ENCODE measurements at regions of chr5 and their contacts with region 1.

Region 1: GRCh38 chr5:149551200-149552037 is at the start of gene CSNK1A1:
- DNase-seq: peak; percentile 99
- H3K4me3 Mint-ChIP-seq: peak within 1 kb of the TSS; percentile 97
- H3K27ac Mint-ChIP-seq: peak within 1 kb of the TSS; percentile 99
- H3K4me1 Mint-ChIP-seq: peaks cover 33% of the 10 kb centered on the region
- H3K27me3 Mint-ChIP-seq: no peaks in the 10 kb centered on the region
- total RNA-seq, gene CSNK1A1: 165 to 170 TPM

Region 2: DNA sequence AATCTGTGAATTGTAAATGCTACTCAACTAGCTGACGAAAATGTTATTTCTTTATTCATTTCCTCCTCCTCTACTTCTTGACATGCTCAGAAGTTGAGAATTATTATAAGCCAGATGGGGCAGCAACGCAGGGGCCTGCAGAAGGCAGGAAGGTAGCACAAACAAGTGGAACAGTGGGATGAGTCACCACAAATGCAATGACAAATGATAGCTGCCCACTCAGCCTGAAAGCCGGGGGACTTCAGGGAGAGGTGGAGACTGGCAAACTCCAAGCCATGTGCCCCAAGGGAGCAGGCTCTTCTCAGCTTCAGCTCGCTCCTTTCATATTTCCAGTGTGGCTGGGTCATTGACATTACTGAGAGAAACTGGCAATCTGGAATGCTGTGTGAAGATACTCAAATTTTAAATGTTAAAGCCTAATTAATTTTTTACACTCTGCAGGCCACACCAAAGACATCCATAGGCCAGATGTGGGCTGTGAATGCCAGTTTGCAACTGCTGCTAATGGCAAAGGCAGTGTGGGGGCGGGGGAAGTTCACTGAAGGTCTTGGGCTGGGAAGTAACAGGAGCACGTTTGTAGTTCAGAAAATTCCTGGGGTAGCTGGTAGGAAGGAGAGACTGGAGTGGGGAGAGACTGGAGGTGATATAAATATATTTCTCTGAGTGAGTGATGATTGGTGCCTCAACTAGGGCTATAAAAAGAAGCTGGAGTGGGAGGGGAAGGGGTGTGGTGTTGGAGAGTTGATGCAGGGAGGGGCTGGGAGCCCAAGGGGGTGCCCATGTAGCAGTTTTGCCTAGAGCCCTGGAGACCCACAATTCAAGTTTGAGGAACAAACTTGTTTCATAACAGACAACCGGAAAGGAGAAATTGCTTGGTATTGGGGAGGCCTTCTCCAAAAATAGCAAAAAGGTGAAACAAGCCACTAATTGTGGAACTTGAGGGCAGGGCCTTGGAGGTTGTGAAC is 745.8 kb before region 1 on chr5:
- CTCF ChIA-PET with region 1: no interaction called
- POLR2A ChIA-PET with region 1: no interaction called
- intact Hi-C with region 1: loop called (anchors 10 kb)
- DNase-seq: peak; percentile 70
- H3K4me3 Mint-ChIP-seq: no peak overlapping the region
- H3K27ac Mint-ChIP-seq: peak overlapping the region; percentile 16
- H3K4me1 Mint-ChIP-seq: peaks cover 62% of the 10 kb centered on the region
- H3K27me3 Mint-ChIP-seq: peaks cover 15% of the 10 kb centered on the region

Region 3: GRCh38 chr5:149357370-149358293 is 193.8 kb before region 1 on chr5 and contains the start of gene PCYOX1L:
- CTCF ChIA-PET with region 1: interaction called, 17 read pairs
- POLR2A ChIA-PET with region 1: interaction called, 10 read pairs
- intact Hi-C with region 1: no loop called
- DNase-seq: peak; percentile 95
- H3K4me3 Mint-ChIP-seq: peak within 1 kb of the TSS; percentile 90
- H3K27ac Mint-ChIP-seq: peak within 1 kb of the TSS; percentile 89
- H3K4me1 Mint-ChIP-seq: peaks cover 64% of the 10 kb centered on the region
- H3K27me3 Mint-ChIP-seq: no peaks in the 10 kb centered on the region
- total RNA-seq, gene PCYOX1L: 21.8 to 24.0 TPM

Region 4: DNA sequence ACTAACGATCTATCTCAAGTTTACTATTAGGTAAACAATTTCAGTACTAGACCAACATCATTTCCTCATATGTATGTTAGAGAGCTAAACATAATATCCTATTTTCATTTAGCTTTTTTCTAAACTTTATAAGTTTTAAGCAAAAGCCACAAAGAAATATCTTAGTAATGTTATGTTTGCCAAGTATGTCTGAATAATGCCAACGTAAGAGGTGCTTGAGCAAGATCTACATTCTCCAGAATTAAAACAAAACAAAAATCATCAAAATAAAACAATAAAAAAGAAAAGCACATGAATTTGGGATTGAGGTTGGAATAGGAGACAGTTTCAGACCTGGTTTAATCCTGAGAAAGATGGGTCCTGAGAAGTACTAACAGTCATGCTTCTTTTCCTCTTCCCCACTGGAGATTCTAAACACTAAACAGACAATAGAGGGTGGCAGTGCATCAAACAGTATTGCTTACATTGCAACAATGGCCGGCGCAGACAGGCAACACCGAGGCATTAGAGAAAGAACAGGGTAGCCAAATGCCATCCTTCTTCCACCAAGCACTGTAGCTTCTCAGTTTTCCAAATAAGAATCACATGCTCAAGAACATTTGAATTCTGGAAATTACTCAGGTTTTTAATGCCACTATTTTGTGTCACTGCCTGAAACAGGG is 33.8 kb before region 1 on chr5:
- CTCF ChIA-PET with region 1: interaction called, 9 read pairs
- POLR2A ChIA-PET with region 1: interaction called, 3 read pairs
- intact Hi-C with region 1: loop called (anchors 2 kb)
- DNase-seq: no peak
- H3K4me3 Mint-ChIP-seq: no peak overlapping the region
- H3K27ac Mint-ChIP-seq: no peak overlapping the region
- H3K4me1 Mint-ChIP-seq: peaks cover 67% of the 10 kb centered on the region
- H3K27me3 Mint-ChIP-seq: no peaks in the 10 kb centered on the region

Region 5: DNA sequence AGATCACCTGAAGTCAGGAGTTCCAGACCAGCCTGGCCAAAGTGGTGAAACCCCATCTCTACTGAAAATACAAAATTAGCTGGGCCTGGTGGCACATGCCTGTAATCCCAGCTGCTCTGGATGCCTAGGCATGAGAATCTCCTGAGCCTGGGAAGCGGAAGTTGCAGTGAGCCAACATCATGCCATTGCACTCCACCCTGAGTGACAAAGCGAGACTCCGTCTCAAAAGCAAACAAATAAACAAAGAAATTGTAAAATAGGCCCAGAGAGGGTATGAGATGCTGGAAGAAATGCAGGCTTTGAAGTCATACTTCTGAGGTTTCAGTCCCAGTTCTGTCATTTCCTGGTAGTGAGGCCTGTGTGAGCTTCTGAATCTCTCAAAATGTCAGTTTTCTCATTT is 24.6 kb after region 1 on chr5:
- CTCF ChIA-PET with region 1: interaction called, 7 read pairs
- POLR2A ChIA-PET with region 1: interaction called, 4 read pairs
- intact Hi-C with region 1: loop called (anchors 1 kb)
- DNase-seq: peak; percentile 48
- H3K4me3 Mint-ChIP-seq: no peak overlapping the region
- H3K27ac Mint-ChIP-seq: peak overlapping the region; percentile 83
- H3K4me1 Mint-ChIP-seq: peaks cover 26% of the 10 kb centered on the region
- H3K27me3 Mint-ChIP-seq: peaks cover 3% of the 10 kb centered on the region

Region 6: GRCh38 chr5:149680810-149681221 is 129.4 kb after region 1 on chr5:
- CTCF ChIA-PET with region 1: no interaction called
- POLR2A ChIA-PET with region 1: no interaction called
- intact Hi-C with region 1: no loop called
- DNase-seq: no peak
- H3K4me3 Mint-ChIP-seq: no peak overlapping the region
- H3K27ac Mint-ChIP-seq: no peak overlapping the region
- H3K4me1 Mint-ChIP-seq: no peaks in the 10 kb centered on the region
- H3K27me3 Mint-ChIP-seq: peaks cover 18% of the 10 kb centered on the region

Region 7: DNA sequence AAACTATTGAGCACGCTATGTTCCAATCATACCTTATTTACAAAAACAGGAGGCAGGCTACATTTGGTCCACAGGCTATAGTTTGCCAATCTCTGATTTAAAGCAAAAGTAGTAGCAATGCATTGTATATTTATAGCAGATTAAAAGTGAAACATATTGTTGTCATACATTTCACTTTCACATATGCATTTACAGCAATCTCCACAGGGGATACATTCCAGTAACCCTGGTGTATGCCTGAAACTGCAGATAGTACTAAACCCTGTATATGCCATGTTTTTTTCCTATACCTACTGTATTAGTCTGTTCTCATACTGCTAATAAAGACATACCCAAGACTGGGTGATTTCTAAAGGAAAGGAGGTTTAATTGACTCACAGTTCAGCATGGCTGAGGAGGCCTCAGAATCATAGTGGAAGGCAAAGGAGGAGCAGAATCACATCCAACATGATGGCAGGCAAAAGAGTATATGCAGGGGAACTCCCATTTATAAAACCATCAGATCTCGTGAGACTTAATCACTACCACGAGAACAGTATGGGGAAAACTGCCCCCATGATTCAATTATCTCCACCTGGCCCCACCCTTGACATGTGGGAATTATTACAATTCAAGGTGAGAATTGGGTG is 540.9 kb after region 1 on chr5:
- CTCF ChIA-PET with region 1: no interaction called
- POLR2A ChIA-PET with region 1: no interaction called
- intact Hi-C with region 1: no loop called
- DNase-seq: peak; percentile 18
- H3K4me3 Mint-ChIP-seq: no peak overlapping the region
- H3K27ac Mint-ChIP-seq: peak overlapping the region; percentile 28
- H3K4me1 Mint-ChIP-seq: peaks cover 9% of the 10 kb centered on the region
- H3K27me3 Mint-ChIP-seq: peaks cover 16% of the 10 kb centered on the region

Region 8: DNA sequence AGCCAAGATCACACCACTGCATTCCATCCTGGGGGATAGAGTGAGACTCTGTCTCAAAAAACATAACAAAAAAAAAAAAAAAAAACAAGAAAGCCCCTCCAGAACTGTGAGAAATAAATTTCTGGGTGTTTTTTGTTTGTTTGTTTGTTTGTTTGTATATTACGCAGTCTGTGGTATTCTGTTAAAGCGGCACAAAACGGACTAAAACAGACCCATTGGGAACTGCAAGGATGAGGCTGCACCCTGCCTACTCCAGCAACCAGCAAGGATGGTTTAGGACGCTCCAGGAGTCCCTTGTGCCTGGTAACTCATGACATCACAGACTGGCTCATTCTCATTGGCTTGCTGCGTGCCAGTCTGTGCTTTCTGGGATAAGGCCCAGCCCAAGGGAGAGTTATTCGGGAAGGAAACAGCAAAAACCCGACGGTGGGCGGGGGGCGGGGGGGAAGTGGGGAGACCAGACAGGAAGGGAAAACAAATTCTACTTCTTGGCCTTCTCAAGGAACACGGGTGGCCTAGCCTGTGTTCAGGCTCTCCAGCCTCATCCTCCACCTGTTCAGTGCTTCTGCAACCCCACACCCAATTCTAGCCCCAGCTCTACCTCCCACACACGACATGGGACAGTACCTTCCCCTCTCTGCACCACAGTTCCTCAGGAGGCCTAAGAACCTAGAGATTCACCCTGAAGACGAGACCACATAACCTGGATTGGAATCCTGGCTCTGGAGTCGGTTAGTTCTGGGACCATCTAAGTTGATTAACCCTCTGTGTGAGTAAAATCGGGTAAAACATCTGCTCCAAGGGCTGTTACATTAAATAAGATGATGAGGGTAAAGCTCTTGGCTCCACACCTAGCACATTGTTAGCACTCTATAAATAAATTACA is 858.5 kb after region 1 on chr5:
- CTCF ChIA-PET with region 1: no interaction called
- POLR2A ChIA-PET with region 1: no interaction called
- intact Hi-C with region 1: loop called (anchors 2 kb)
- DNase-seq: peak; percentile 70
- H3K4me3 Mint-ChIP-seq: peak overlapping the region; percentile 97
- H3K27ac Mint-ChIP-seq: peak overlapping the region; percentile 99
- H3K4me1 Mint-ChIP-seq: peaks cover 39% of the 10 kb centered on the region
- H3K27me3 Mint-ChIP-seq: no peaks in the 10 kb centered on the region